ENCODE measurements at regions of chr15 and their contacts with region 1.

Region 1: DNA sequence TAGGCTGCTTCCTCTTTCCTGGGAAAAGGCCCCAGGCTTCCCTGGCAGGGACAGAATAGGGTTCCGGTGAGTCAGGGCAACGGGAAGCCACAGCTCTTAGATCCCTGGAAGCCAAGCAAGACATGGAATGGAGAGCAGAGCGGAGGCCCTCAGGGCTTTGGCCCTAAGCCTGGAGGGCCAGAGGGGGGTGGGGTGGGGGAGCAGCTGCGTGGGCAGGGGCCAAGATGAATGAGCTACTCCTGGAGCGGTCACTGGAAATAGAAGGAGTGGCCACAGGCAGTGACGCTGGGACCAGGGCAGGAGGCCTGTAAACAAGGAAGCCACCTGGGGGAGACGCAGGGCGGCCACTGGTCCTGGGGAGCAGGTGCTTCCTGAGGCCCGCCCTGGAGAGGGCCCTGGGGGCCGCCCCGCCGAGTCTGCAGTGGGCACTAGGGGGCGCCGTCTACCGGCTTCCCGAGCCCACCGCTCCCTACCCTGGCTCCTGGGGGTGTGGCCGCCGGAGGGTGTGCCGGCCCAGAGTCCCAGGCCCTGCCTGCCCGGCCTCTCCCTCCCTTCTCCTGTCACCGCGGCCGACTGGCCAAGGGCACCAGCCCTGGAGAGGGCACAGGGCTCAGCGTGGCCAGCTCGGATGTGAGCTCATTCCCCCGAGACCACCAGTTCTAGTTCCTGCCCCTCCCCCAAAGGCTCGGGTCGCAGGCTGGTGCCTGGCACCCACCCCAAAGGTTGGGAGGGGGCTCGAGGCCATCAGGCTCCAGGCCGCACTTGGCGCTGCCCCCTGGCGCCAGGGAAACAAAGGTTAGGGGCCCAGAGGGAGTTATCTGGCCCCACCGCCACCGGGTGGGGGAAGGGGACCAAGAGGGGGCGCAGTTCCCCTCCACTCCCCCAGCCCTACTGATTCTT is 12.1 kb downstream of the VPS18 start:
- DNase-seq: no peak
- ATAC-seq: peak; percentile 91
- H3K4me3 ChIP-seq: peak overlapping the region; percentile 60
- H3K27ac ChIP-seq: peak overlapping the region; percentile 49
- H3K4me1 ChIP-seq: peaks cover 24% of the 10 kb centered on the region
- H3K27me3 ChIP-seq: no peaks in the 10 kb centered on the region
- CTCF ChIP-seq: peak; percentile 73 to 90 (median 89)
- EP300 ChIP-seq: no peak
- POLR2A ChIP-seq: peak; percentile 52; the same call in 1 of the 2 replicates
- RAD21 ChIP-seq: peak; percentile 66

Region 2: GRCh38 chr15:40685376-40685775 is 221.0 kb before region 1 on chr15:
- CTCF ChIA-PET with region 1: no interaction called
- POLR2A ChIA-PET with region 1: no interaction called
- RAD21 ChIA-PET with region 1: no interaction called
- SMC1A ChIA-PET with region 1: no interaction called
- in situ Hi-C with region 1: no loop called
- intact Hi-C with region 1: no loop called
- DNase-seq: no peak
- ATAC-seq: no peak
- H3K4me3 ChIP-seq: no peak overlapping the region
- H3K27ac ChIP-seq: no peak overlapping the region
- H3K4me1 ChIP-seq: no peaks in the 10 kb centered on the region
- H3K27me3 ChIP-seq: no peaks in the 10 kb centered on the region
- CTCF ChIP-seq: no peak
- EP300 ChIP-seq: no peak
- POLR2A ChIP-seq: no peak
- RAD21 ChIP-seq: no peak

Region 3: DNA sequence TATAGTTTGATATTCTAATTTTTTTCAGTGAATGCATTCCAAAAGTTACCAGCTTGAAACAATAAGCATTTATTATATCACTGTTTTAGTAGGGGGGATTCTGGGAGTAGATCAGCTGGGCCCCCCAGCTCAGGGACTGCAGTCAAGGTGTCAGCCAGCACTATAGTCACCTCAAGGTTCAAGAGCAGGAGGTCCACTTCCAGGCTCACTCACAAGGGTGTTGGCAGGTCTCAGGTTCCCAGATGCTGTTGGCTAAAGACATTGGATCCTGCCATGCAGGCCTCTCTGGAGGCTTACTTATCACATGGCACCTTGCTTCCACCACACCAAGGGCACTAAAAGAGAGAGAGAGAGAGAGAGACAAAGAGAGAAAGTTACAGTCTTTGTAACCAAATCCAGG is 70.4 kb before region 1 on chr15:
- CTCF ChIA-PET with region 1: no interaction called
- POLR2A ChIA-PET with region 1: no interaction called
- RAD21 ChIA-PET with region 1: no interaction called
- SMC1A ChIA-PET with region 1: no interaction called
- in situ Hi-C with region 1: no loop called
- intact Hi-C with region 1: no loop called
- DNase-seq: no peak
- ATAC-seq: no peak
- H3K4me3 ChIP-seq: no peak overlapping the region
- H3K27ac ChIP-seq: no peak overlapping the region
- H3K4me1 ChIP-seq: no peaks in the 10 kb centered on the region
- H3K27me3 ChIP-seq: no peaks in the 10 kb centered on the region
- CTCF ChIP-seq: no peak
- EP300 ChIP-seq: no peak
- POLR2A ChIP-seq: no peak
- RAD21 ChIP-seq: no peak

Region 4: DNA sequence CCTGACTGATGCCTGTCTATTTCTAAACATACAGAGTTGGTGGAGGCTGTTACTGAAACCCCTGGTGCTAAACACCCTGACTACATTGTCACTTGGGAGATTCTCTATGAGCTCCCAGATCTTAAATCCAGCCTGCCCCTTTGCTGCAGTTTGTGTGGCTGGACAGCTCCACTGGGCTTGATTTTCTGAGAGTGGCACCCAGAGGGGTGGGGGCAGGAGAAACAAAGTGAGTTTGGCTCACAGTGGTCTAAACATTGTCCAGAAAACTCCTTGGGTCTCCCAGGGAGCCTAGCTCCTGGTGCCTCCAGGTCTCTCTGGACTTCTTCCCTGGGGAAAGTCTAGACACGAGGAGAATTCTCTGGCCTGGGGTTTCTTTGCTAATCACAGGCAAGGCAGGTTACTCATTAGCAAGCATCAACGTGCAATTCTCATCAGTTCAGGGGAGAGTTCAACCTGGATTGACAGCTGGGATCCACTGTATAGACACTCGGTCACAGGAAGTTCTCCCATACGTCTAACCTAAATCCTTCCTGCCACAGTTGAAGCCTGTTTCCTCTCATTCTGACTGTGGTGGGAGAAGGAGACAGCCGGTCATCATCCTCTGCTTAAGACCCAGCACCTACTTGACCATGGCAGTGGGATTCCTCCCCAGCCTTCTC is 15.7 kb after region 1 on chr15:
- CTCF ChIA-PET with region 1: interaction called, 18 read pairs
- POLR2A ChIA-PET with region 1: interaction called, 3 read pairs
- RAD21 ChIA-PET with region 1: interaction called, 3 read pairs
- SMC1A ChIA-PET with region 1: interaction called, 3 read pairs
- in situ Hi-C with region 1: no loop called
- intact Hi-C with region 1: no loop called
- DNase-seq: no peak
- ATAC-seq: no peak
- H3K4me3 ChIP-seq: no peak overlapping the region
- H3K27ac ChIP-seq: no peak overlapping the region
- H3K4me1 ChIP-seq: peaks cover 8% of the 10 kb centered on the region; the same call in 1 of the 2 replicates
- H3K27me3 ChIP-seq: peaks cover 11 to 18% of the 10 kb centered on the region in 2 experiments
- CTCF ChIP-seq: no peak
- EP300 ChIP-seq: no peak
- POLR2A ChIP-seq: no peak
- RAD21 ChIP-seq: no peak

Region 5: GRCh38 chr15:40928821-40929659 is 22.7 kb after region 1 on chr15 and contains the start of gene DLL4:
- CTCF ChIA-PET with region 1: interaction called, 52 read pairs
- POLR2A ChIA-PET with region 1: interaction called, 3 read pairs
- RAD21 ChIA-PET with region 1: interaction called, 9 read pairs
- SMC1A ChIA-PET with region 1: interaction called, 5 read pairs
- in situ Hi-C with region 1: no loop called
- intact Hi-C with region 1: no loop called
- DNase-seq: no peak
- ATAC-seq: peak; percentile 54
- H3K4me3 ChIP-seq: peak within 1 kb of the TSS; percentile 64
- H3K27ac ChIP-seq: no peak within 1 kb of the TSS
- H3K4me1 ChIP-seq: peaks cover 33% of the 10 kb centered on the region
- H3K27me3 ChIP-seq: peaks cover 22 to 31% of the 10 kb centered on the region in 2 experiments
- CTCF ChIP-seq: no peak
- EP300 ChIP-seq: no peak
- POLR2A ChIP-seq: peak; percentile 78
- RAD21 ChIP-seq: no peak
- polyA plus RNA-seq, gene DLL4: not detected

Region 6: DNA sequence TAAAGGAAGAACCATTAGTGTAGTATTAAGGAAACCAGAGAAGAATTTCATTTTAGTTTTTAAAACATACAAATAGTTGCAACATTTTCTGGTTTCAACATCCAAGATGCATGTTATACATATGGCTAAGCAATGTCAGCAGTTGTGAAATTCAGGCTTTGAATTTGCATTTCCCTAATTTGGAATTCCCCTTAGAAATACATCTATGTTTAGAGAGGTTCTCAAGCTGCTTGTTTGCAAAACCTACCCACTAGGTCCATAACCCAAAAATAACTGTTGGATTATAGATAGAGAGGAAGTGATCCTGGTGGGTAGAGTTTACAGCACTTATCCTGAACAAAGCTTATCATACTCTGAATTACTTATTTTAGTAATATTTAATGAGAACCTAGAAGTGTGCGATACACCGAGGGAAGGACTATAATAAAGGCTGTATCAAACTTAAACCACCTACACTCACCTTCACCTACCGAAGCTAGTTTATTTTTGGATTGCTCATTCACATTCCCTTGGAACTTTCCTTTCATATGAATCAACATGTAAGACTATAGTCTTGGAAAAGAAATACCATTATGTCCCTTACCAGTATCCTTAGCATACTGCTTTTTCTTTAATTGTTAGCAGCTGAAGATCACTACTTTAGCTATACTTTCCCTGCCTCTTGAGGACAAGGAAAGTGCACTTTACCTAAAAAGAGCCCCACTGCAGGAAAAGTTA is 107.5 kb after region 1 on chr15:
- CTCF ChIA-PET with region 1: interaction called, 157 read pairs
- POLR2A ChIA-PET with region 1: no interaction called
- RAD21 ChIA-PET with region 1: interaction called, 11 read pairs
- SMC1A ChIA-PET with region 1: interaction called, 9 read pairs
- in situ Hi-C with region 1: no loop called
- intact Hi-C with region 1: loop called (anchors 2 kb)
- DNase-seq: peak; percentile 50
- ATAC-seq: peak; percentile 85
- H3K4me3 ChIP-seq: no peak overlapping the region
- H3K27ac ChIP-seq: peak overlapping the region; percentile 85
- H3K4me1 ChIP-seq: peaks cover 21% of the 10 kb centered on the region
- H3K27me3 ChIP-seq: no peaks in the 10 kb centered on the region
- CTCF ChIP-seq: no peak
- EP300 ChIP-seq: no peak
- POLR2A ChIP-seq: no peak
- RAD21 ChIP-seq: no peak

Region 7: GRCh38 chr15:41022487-41023090 is 116.2 kb after region 1 on chr15:
- CTCF ChIA-PET with region 1: interaction called, 157 read pairs
- POLR2A ChIA-PET with region 1: no interaction called
- RAD21 ChIA-PET with region 1: interaction called, 23 read pairs
- SMC1A ChIA-PET with region 1: interaction called, 13 read pairs
- in situ Hi-C with region 1: no loop called
- intact Hi-C with region 1: loop called (anchors 1 kb)
- DNase-seq: peak; percentile 21
- ATAC-seq: peak; percentile 87
- H3K4me3 ChIP-seq: no peak overlapping the region
- H3K27ac ChIP-seq: no peak overlapping the region
- H3K4me1 ChIP-seq: no peaks in the 10 kb centered on the region
- H3K27me3 ChIP-seq: no peaks in the 10 kb centered on the region
- CTCF ChIP-seq: peak; percentile 73 to 90 (median 76); a peak in 5 of 6 replicates
- EP300 ChIP-seq: no peak
- POLR2A ChIP-seq: no peak
- RAD21 ChIP-seq: peak; percentile 87

Region 8: DNA sequence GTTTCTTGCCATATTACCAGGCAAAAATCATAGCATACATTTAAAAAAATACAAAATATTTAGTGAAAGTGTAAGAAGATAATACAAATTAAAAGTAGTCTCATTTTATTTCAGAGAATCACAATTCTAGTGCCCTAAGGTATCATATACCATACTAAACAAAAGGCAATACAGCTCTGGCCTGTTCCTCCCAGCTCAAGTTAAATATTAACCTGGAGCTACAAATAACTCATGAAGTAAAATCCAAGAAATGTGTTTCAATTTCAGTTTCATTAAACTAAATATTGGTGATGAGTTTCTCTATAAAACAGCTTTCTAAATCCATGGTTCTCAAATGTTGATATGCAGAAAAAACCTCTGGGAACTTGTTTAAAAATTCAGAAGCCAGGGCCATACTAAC is 142.1 kb after region 1 on chr15:
- CTCF ChIA-PET with region 1: interaction called, 10 read pairs
- POLR2A ChIA-PET with region 1: no interaction called
- RAD21 ChIA-PET with region 1: interaction called, 4 read pairs
- SMC1A ChIA-PET with region 1: no interaction called
- in situ Hi-C with region 1: no loop called
- intact Hi-C with region 1: no loop called
- DNase-seq: no peak
- ATAC-seq: peak; percentile 77
- H3K4me3 ChIP-seq: no peak overlapping the region
- H3K27ac ChIP-seq: no peak overlapping the region
- H3K4me1 ChIP-seq: no peaks in the 10 kb centered on the region
- H3K27me3 ChIP-seq: no peaks in the 10 kb centered on the region
- CTCF ChIP-seq: no peak
- EP300 ChIP-seq: no peak
- POLR2A ChIP-seq: no peak
- RAD21 ChIP-seq: no peak

Region 9: GRCh38 chr15:41180206-41180789 is 274.0 kb after region 1 on chr15:
- CTCF ChIA-PET with region 1: interaction called, 128 read pairs
- POLR2A ChIA-PET with region 1: interaction called, 3 read pairs
- RAD21 ChIA-PET with region 1: interaction called, 82 read pairs
- SMC1A ChIA-PET with region 1: interaction called, 49 read pairs
- in situ Hi-C with region 1: loop called (anchors 5 kb)
- intact Hi-C with region 1: loop called (anchors 1 kb)
- DNase-seq: no peak
- ATAC-seq: no peak
- H3K4me3 ChIP-seq: no peak overlapping the region
- H3K27ac ChIP-seq: no peak overlapping the region
- H3K4me1 ChIP-seq: no peaks in the 10 kb centered on the region
- H3K27me3 ChIP-seq: no peaks in the 10 kb centered on the region; a peak in 1 of 4 replicates
- CTCF ChIP-seq: no peak
- EP300 ChIP-seq: no peak
- POLR2A ChIP-seq: no peak
- RAD21 ChIP-seq: no peak